SK-N-SH (cell line): ENCODE measurements at regions of chr4 and their contacts with region 1.

Region 1: GRCh38 chr4:7719354-7720174 is 220.1 kb downstream of the AFAP1 start:
- DNase-seq: peak; percentile 96
- H3K4me3 ChIP-seq: peak overlapping the region in 1 of 2 experiments; percentile 15; a peak in 1 of 4 replicates
- H3K27ac ChIP-seq: no peak overlapping the region
- H3K4me1 ChIP-seq: no peaks in the 10 kb centered on the region; a peak in 1 of 4 replicates
- H3K27me3 ChIP-seq: no peaks in the 10 kb centered on the region
- CTCF ChIP-seq: peak; percentile 90
- EP300 ChIP-seq: no peak
- RAD21 ChIP-seq: peak; percentile 84

Region 2: DNA sequence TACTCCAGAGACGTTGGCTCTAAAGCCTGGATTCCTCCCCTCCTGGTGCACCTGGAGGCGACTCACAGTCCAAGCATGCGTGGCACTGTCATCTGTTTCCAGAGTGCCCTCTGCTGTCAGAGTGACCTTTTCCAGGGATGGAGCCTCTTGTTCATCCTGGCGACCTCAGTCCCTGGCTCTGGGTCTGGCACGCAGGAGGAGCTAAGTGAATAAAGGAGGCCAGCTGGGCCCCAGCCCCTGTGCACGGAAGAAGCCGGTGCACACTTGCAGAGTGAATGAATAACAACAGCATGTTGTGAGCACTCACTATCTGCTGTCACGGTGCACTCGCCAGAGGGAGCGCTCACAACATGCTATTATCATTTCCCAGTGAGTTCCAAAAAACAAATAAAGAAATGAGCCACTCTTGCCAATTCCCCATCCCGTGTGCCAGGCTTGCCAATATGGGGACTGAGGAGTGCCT is 257.0 kb before region 1 on chr4:
- CTCF ChIA-PET with region 1: interaction called, 13 read pairs
- POLR2A ChIA-PET with region 1: no interaction called
- DNase-seq: peak; percentile 71
- H3K4me3 ChIP-seq: no peak overlapping the region
- H3K27ac ChIP-seq: no peak overlapping the region
- H3K4me1 ChIP-seq: peaks cover 0 to 24% of the 10 kb centered on the region in 2 experiments; a peak in 1 of 4 replicates
- H3K27me3 ChIP-seq: no peaks in the 10 kb centered on the region
- CTCF ChIP-seq: no peak
- EP300 ChIP-seq: no peak
- RAD21 ChIP-seq: peak; percentile 60

Region 3: GRCh38 chr4:7705062-7705461 is 14.5 kb before region 1 on chr4:
- CTCF ChIA-PET with region 1: interaction called, 13 read pairs
- POLR2A ChIA-PET with region 1: no interaction called
- DNase-seq: no peak
- H3K4me3 ChIP-seq: no peak overlapping the region
- H3K27ac ChIP-seq: no peak overlapping the region
- H3K4me1 ChIP-seq: peaks cover 0 to 5% of the 10 kb centered on the region in 2 experiments; a peak in 1 of 4 replicates
- H3K27me3 ChIP-seq: no peaks in the 10 kb centered on the region
- CTCF ChIP-seq: no peak
- EP300 ChIP-seq: no peak
- RAD21 ChIP-seq: no peak

Region 4: GRCh38 chr4:7736436-7737269 is 17.1 kb after region 1 on chr4:
- CTCF ChIA-PET with region 1: interaction called, 23 read pairs
- POLR2A ChIA-PET with region 1: no interaction called
- DNase-seq: no peak
- H3K4me3 ChIP-seq: no peak overlapping the region
- H3K27ac ChIP-seq: no peak overlapping the region
- H3K4me1 ChIP-seq: no peaks in the 10 kb centered on the region
- H3K27me3 ChIP-seq: no peaks in the 10 kb centered on the region
- CTCF ChIP-seq: no peak
- EP300 ChIP-seq: no peak
- RAD21 ChIP-seq: no peak